ENCODE measurements at regions of chr6 and their contacts with region 1.

Region 1: GRCh38 chr6:40336940-40337760 is 250.0 kb downstream of the LRFN2 start:
- DNase-seq: no peak
- H3K4me3 ChIP-seq: no peak overlapping the region
- H3K27ac ChIP-seq: no peak overlapping the region
- H3K4me1 ChIP-seq: no peaks in the 10 kb centered on the region
- H3K27me3 ChIP-seq: no peaks in the 10 kb centered on the region
- CTCF ChIP-seq: no peak
- POLR2A ChIP-seq: no peak

Region 2: DNA sequence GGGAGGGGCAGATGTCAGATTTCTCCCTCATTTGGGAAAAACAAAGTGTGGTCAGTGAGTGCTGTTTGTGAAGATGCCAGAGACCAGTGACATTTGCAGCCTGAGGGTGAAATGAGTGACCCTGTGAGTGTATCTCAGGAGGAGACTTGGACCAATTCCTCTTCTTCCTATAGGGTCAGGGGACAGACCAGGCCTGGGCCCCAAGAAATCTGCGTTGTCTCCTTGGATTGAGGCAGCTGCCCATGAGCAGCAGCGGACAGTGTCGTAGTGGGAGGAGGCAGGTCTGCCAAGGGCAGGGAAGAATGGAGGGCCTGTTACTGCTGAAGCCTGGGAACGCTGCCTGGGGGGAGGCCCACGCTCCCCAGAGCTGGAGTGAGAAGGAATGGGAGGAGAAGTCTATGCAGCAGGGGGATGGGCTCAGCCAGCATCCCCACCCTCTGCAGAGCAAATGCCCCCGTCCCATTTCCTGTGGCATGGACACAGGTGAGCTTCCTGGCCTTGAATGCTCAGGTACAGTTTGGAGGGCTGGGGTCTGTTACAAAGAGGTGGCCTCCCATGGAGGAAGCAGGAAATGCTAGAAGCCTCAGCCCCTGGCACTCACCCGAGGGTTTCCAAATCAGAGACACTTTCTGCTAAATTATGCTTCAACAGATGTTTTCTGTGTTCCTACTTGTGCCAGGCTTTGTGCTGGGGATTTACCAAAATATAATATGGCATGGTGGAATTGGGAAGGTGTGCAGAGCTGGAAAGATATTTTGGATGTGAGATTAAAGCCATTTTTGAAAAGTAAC is 515.2 kb before region 1 on chr6:
- intact Hi-C with region 1: no loop called
- DNase-seq: no peak
- H3K4me3 ChIP-seq: no peak overlapping the region
- H3K27ac ChIP-seq: peak overlapping the region; percentile 54 to 67 (median 62)
- H3K4me1 ChIP-seq: peaks cover 9 to 27% of the 10 kb centered on the region in 2 donors
- H3K27me3 ChIP-seq: no peaks in the 10 kb centered on the region
- CTCF ChIP-seq: no peak
- POLR2A ChIP-seq: no peak

Region 3: DNA sequence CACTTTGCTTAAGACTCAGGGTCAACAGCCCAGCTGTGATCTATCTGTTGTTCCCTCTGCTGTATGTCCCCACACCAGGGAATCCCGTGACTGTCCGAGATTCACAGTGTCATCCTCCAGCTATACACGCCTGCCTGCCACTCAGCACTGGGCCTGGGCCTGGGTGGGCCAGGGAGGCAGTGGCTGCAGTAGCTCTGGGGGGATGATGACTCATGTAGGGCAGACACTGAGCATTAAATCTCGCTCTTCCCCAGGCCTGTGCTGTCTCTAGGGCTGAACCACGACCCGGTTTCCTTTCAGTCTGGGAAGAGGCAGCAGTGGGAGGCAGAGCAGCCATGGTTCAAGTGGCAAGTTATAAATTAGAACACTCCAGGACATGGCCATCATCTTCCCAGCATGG is 76.1 kb after region 1 on chr6:
- intact Hi-C with region 1: no loop called
- DNase-seq: no peak
- H3K4me3 ChIP-seq: no peak overlapping the region
- H3K27ac ChIP-seq: no peak overlapping the region
- H3K4me1 ChIP-seq: no peaks in the 10 kb centered on the region
- H3K27me3 ChIP-seq: no peaks in the 10 kb centered on the region
- CTCF ChIP-seq: no peak
- POLR2A ChIP-seq: no peak

Region 4: DNA sequence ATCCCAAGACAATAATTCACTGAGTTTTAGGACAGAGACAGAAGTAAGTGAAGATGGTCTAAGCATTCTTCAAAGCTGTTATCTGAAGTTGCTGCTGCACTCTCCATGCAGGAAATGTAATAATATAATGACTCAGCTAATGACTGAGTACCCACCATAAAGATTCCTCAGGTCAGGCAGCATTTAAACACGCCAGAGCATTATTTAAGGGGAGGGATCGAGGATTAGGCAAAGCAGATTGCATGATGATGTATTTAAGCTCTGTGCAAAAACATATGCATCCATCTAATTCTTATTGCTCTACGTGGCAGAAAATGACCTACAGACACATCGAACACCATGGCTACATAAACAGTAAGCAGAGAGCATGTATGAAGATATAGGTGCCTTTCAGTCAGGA is 485.5 kb after region 1 on chr6:
- intact Hi-C with region 1: loop called (anchors 10 kb)
- DNase-seq: no peak
- H3K4me3 ChIP-seq: no peak overlapping the region
- H3K27ac ChIP-seq: no peak overlapping the region
- H3K4me1 ChIP-seq: peaks cover 3 to 9% of the 10 kb centered on the region in 2 donors
- H3K27me3 ChIP-seq: no peaks in the 10 kb centered on the region
- CTCF ChIP-seq: no peak
- POLR2A ChIP-seq: no peak